ENCODE measurements at regions of chr2 and their contacts with region 1.

Region 1: DNA sequence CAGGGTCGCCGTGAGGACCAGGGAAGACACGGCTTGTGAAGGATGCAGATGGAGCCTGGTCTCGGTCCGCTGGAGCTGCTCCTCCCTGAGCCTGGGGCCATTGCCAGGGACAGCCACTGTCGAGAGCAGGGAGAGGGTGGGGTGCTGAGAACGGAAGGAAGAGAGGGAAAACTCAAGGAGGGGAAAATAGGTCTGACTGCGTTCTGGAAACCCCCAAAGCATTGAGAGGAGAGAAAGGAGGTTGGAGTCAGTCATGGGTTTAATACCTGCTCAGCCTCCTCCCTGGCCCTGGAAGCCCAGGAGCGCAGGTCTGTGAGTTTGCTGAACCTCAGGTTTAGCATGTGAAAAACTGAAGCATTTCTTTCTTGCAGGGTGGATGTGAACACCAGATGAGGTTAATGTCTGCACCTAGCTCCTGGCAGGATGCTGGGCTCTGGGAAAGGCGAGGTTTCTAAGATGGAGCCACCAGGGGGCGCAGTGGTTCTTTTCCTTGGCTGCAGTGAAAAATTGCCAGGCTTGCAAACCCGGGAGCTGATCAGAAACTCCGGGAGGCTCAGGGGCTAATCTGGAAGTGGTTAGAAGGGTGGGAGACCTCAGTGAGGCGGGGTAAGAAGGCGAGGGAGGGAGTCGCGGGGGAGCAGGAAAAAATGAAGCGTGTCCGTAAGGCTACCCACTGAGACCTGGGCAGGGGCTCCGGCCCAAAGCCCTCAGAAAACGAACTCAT is 33.6 kb upstream of the RNF149 start:
- DNase-seq: peak; percentile 70 to 78 (median 75)
- ATAC-seq: peak; percentile 89
- H3K4me3 ChIP-seq: no peak overlapping the region
- H3K27ac ChIP-seq: no peak overlapping the region
- H3K4me1 ChIP-seq: peaks cover 0 to 4% of the 10 kb centered on the region in 2 experiments; a peak in 2 of 5 replicates
- H3K27me3 ChIP-seq: peaks cover 5 to 27% of the 10 kb centered on the region in 2 experiments; a peak in 2 of 5 replicates
- CTCF ChIP-seq: peak; percentile 71 to 85 (median 83)
- EP300 ChIP-seq: no peak
- POLR2A ChIP-seq: no peak
- RAD21 ChIP-seq: peak; percentile 49 to 67

Region 2: DNA sequence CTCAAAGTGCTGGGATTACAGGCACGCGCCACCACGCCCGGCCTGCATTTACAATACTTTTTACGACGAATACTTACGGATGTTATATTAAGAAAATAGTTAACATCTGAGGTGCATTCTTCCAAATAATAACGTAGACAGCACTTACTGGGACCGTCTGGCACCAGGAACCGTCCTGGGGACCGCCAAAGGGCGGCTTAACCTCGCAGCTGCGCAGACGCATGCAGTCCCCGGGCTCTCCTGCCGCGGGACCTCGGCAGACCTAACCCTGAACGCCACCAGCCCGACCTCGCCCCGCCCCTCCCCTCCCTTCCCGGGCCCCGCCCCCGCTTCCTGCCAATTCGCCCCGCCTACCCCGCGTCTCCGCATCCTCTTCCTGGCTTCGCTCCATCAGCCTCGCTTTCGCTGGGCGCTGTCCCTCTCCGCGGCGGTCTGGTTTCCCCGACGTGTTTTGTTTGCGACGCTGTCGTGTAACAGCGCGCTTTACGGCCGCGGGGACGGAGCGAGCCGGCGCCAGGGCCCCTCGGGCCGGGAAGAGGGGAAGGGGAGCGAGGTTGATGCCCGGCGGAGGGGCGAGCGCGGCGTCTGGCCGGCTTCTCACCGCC is 89.6 kb before region 1 on chr2 and contains the start of gene CNOT11:
- CTCF ChIA-PET with region 1: no interaction called
- POLR2A ChIA-PET with region 1: interaction called, 3 read pairs
- in situ Hi-C with region 1: no loop called
- intact Hi-C with region 1: loop called (anchors 10 kb)
- DNase-seq: peak; percentile 95 to 98 (median 96)
- ATAC-seq: peak; percentile 96
- H3K4me3 ChIP-seq: peak within 1 kb of the TSS; percentile 97
- H3K27ac ChIP-seq: peak within 1 kb of the TSS; percentile 89
- H3K4me1 ChIP-seq: peaks cover 22 to 24% of the 10 kb centered on the region in 2 experiments
- H3K27me3 ChIP-seq: no peaks in the 10 kb centered on the region
- CTCF ChIP-seq: no peak
- EP300 ChIP-seq: no peak
- POLR2A ChIP-seq: peak; percentile 96
- RAD21 ChIP-seq: peak in 1 of 2 experiments; percentile 6; a peak in 1 of 4 replicates
- polyA plus RNA-seq, gene CNOT11: 12.7 to 13.2 TPM

Region 3: DNA sequence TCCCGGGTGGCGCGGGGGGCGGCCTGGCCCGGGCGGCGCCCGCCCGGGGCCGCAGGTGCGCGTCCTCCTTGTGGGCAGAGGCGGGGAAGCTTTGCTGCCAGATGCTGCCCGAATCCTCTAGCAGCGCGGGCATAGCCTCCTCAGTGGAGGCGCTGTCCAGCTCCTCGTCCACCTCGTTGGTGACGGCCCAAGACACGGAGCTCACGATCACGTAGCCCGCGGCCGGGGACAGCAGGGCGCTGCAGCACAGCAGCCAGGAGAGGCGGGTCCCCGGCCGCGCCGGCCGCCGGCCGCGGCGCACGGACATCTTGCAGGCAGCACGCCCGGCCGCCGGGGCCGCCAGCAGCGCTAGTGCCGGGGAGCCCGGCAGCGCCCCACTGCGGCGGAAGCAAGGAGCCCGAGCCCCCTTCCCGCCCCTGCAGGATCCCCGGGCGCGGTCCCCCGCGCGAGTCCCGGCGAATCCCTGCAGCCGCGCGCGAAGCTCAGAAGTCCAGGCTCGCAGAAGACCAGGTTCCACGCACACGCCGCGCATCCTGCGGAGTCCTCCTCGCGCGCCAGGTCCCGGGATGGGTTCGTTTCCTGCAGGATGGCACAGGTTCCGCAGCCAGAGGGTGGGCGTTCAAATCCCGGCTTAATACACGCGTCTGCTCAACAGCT is 45.2 kb after region 1 on chr2 and contains the start of gene CREG2:
- CTCF ChIA-PET with region 1: no interaction called
- POLR2A ChIA-PET with region 1: no interaction called
- in situ Hi-C with region 1: no loop called
- intact Hi-C with region 1: loop called (anchors 1 kb)
- DNase-seq: peak; percentile 14 to 44 (median 19)
- ATAC-seq: peak; percentile 89
- H3K4me3 ChIP-seq: no peak within 1 kb of the TSS
- H3K27ac ChIP-seq: no peak within 1 kb of the TSS
- H3K4me1 ChIP-seq: peaks cover 0 to 10% of the 10 kb centered on the region in 2 experiments; a peak in 2 of 5 replicates
- H3K27me3 ChIP-seq: peaks cover 18 to 33% of the 10 kb centered on the region in 2 experiments; a peak in 4 of 5 replicates
- CTCF ChIP-seq: peak in 2 of 3 experiments; percentile 26 to 75; a peak in 3 of 6 replicates
- EP300 ChIP-seq: no peak
- POLR2A ChIP-seq: no peak
- RAD21 ChIP-seq: peak in 1 of 2 experiments; percentile 24; a peak in 2 of 4 replicates
- polyA plus RNA-seq, gene CREG2: not detected

Region 4: GRCh38 chr2:101736861-101737291 is 394.8 kb after region 1 on chr2:
- CTCF ChIA-PET with region 1: no interaction called
- POLR2A ChIA-PET with region 1: no interaction called
- in situ Hi-C with region 1: no loop called
- intact Hi-C with region 1: no loop called
- DNase-seq: no peak
- ATAC-seq: no peak
- H3K4me3 ChIP-seq: no peak overlapping the region
- H3K27ac ChIP-seq: no peak overlapping the region
- H3K4me1 ChIP-seq: peaks cover 0 to 8% of the 10 kb centered on the region in 2 experiments; a peak in 3 of 5 replicates
- H3K27me3 ChIP-seq: no peaks in the 10 kb centered on the region
- CTCF ChIP-seq: no peak
- EP300 ChIP-seq: no peak
- POLR2A ChIP-seq: no peak
- RAD21 ChIP-seq: no peak